Pancreas (tissue), 10 donors: ENCODE measurements at regions of chr15 and their contacts with region 1.

Region 1: DNA sequence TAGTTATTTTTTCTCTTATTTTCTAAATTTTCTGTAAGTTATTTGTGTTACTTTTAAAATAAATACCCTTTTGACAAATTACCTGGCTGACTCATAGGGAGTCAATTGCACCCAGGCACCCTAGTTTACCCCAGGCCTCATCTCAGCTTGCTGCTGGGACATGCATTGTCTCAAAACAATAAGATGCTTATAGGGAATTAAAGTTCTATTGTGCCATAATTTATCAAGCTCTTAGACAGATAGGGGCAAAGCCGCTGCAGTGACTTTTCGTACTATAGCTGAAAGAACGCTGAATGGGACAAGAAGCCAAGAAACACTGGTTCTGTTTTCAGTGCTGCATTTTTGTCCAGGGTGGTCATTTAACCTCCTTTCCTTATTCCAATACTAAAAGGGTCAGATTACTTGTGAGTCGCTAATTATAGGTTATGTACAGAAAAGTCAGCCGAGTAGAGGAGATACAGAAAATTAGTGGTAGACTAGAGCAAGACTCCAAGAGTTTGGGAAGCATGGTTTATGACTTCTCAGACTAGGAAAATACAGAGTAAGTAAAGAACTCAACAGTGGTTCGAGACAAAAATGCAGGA is 50.3 kb downstream of the EXD1 start:
- DNase-seq: no peak
- ATAC-seq: no peak
- H3K4me3 ChIP-seq: no peak overlapping the region
- H3K27ac ChIP-seq: no peak overlapping the region
- H3K4me1 ChIP-seq: no peaks in the 10 kb centered on the region
- H3K27me3 ChIP-seq: no peaks in the 10 kb centered on the region
- CTCF ChIP-seq: no peak

Region 2: DNA sequence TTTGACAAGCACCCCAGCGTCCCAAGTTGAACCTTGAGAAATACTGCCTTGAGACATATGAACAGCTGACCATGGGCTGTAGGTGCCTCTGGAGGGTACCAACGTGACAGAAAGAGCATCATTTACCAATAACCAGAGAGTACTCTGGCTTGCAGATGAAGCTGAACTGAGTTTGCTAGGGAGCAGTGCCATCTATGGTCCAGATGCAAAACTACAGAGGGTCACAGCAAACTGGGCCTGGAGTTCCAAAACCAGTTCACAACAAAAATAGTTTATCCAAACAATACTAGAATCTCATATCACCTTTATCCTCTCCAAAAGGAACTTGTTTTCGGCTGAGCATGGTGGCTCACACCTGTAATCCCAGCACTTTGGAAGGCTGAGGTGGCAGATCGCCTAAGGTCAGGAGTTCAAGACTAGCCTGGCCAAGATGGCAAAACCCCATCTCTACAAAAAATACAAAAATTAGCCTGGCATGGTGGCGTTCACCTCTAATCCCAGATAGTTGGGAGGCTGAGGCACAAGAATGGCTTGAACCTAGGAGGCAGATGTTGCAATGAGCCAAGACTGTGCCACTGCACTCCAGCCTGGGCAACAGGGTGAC is 157.7 kb before region 1 on chr15:
- intact Hi-C with region 1: loop called in 1 of 3 experiments (anchors 10 kb)
- DNase-seq: peak in 1 of 6 donors; percentile 36
- ATAC-seq: peak in 3 of 4 donors; percentile 71 to 74 (median 73)
- H3K4me3 ChIP-seq: no peak overlapping the region
- H3K27ac ChIP-seq: no peak overlapping the region
- H3K4me1 ChIP-seq: no peaks in the 10 kb centered on the region
- H3K27me3 ChIP-seq: no peaks in the 10 kb centered on the region
- CTCF ChIP-seq: peak in 2 of 4 donors; percentile 41 to 49